ENCODE measurements at regions of chr19 and their contacts with region 1.

Region 1: DNA sequence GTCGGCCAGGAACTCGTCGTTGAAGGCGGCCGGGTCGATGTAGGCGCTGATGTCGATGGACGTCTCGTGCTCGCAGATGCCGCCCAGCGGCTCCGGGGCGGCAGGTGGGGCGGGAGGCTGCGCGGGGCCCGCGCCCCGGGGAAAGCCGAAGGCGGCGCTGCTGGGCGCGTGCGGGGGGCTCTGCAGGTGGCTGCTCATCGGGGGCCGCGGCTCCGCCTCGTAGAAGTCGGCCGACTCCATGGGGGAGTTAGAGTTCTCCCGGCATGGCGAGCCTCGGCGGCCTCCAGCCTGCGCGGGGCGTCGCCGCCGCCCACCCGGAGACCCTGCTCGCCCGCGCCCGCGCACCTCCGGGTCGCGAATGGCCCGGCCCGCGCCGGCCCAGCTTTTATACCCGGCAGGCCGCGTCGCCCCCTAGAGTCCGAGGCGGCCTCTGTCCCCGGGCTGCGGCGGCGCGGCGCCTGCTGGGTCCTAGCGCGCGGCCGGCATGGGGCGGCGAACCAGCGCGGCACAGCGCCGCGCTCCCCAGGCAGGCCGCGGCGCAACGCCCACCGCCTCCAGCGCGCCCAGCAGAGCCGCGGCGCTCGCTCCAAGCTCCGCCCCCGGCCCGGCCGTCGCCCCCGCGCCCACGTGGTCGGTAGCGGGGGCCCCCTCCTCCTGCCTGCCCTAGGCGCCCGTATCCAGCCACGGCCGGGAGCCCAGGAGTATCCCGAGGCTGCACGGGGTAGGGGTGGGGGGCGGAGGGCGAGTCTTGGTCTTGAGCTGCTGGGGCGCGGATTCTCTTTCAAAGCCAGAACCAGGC is at the start of gene CEBPA:
- DNase-seq: peak; percentile 69 to 82
- ATAC-seq: peak; percentile 79 to 94 (median 89)
- H3K4me3 ChIP-seq: peak within 1 kb of the TSS; percentile 54 to 90 (median 79)
- H3K27ac ChIP-seq: peak within 1 kb of the TSS in 9 of 10 donors; percentile 34 to 86 (median 63)
- H3K4me1 ChIP-seq: peaks cover 3 to 46% (median 22%) of the 10 kb centered on the region in 9 donors
- H3K27me3 ChIP-seq: peaks cover 5 to 51% (median 36%) of the 10 kb centered on the region in 7 donors
- CTCF ChIP-seq: peak in 8 of 9 donors; percentile 24 to 69 (median 48)
- total RNA-seq, gene CEBPA: 0.71 to 7.7 (median 2.8) TPM

Region 2: GRCh38 chr19:33373701-33374421 is 71.5 kb after region 1 on chr19 and contains the start of gene CEBPG:
- intact Hi-C with region 1: loop called in 4 of 10 experiments (anchors 5 to 10 kb)
- DNase-seq: peak; percentile 61 to 64
- ATAC-seq: peak; percentile 26 to 58 (median 43)
- H3K4me3 ChIP-seq: peak within 1 kb of the TSS; percentile 61 to 94 (median 80)
- H3K27ac ChIP-seq: peak within 1 kb of the TSS; percentile 89 to 100 (median 98)
- H3K4me1 ChIP-seq: peaks cover 4 to 52% (median 45%) of the 10 kb centered on the region in 9 donors
- H3K27me3 ChIP-seq: no peaks in the 10 kb centered on the region
- CTCF ChIP-seq: peak in 4 of 9 donors; percentile 29 to 46 (median 37)
- total RNA-seq, gene CEBPG: 10.4 to 19.4 (median 13.4) TPM

Region 3: GRCh38 chr19:33640773-33641172 is 338.4 kb after region 1 on chr19:
- intact Hi-C with region 1: no loop called
- DNase-seq: no peak
- ATAC-seq: no peak
- H3K4me3 ChIP-seq: no peak overlapping the region
- H3K27ac ChIP-seq: no peak overlapping the region
- H3K4me1 ChIP-seq: no peaks in the 10 kb centered on the region
- H3K27me3 ChIP-seq: peaks cover 0 to 47% (median 19%) of the 10 kb centered on the region in 7 donors
- CTCF ChIP-seq: no peak